K562 (cell line): ENCODE measurements at regions of chr20 and their contacts with region 1.

Region 1: DNA sequence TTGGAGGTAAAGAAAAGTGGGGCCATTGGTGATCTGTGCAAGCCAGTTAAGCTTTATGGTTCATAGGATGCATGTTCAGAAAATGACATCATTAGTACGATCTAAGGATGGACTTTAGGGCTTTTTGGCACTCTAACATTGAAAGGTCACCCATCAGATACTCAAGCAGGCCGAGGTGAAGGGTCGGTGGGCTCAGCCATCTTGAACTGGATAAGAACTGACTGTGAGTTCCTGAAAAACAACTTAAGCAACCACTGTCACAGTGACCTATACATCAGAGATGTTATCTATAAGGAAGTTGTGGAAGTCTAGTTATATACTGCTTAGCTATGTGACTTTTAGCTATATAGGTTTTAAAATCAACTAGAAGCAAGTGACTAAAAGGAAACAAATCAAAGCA is 13.0 kb upstream of the ITCH start:
- DNase-seq: no peak
- ATAC-seq: peak; percentile 58
- H3K4me3 ChIP-seq: no peak overlapping the region
- H3K27ac ChIP-seq: no peak overlapping the region
- H3K4me1 ChIP-seq: peaks cover 0 to 8% of the 10 kb centered on the region in 2 experiments; a peak in 3 of 5 replicates
- H3K27me3 ChIP-seq: no peaks in the 10 kb centered on the region
- CTCF ChIP-seq: no peak
- EP300 ChIP-seq: no peak
- POLR2A ChIP-seq: no peak
- RAD21 ChIP-seq: no peak

Region 2: DNA sequence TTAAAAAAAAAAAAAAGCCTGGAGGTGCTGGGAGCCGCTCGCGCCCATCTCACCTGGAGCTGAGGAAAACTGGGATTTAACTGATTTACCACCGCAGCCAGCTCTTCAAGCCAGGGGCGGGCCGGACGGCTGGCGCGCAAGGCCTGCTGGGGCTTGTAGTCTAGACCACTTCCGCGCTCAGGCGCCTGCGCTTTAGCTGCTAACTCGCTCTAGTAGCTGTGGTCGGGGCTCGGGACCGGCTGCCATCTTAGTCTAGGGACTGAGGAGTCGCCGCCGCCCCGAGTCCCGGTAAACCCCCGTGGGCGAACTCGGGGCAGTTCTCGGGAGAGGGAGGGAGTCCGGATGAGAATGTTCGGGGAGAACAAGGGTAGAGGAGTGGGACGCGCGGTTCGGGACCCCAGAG is 13.0 kb after region 1 on chr20 and contains the start of gene ITCH:
- CTCF ChIA-PET with region 1: no interaction called
- POLR2A ChIA-PET with region 1: interaction called, 12 read pairs
- in situ Hi-C with region 1: no loop called
- intact Hi-C with region 1: no loop called
- DNase-seq: peak; percentile 94 to 97 (median 94)
- ATAC-seq: peak; percentile 99
- H3K4me3 ChIP-seq: peak within 1 kb of the TSS; percentile 91
- H3K27ac ChIP-seq: peak within 1 kb of the TSS; percentile 86
- H3K4me1 ChIP-seq: peaks cover 18 to 23% of the 10 kb centered on the region in 2 experiments; a peak in 4 of 5 replicates
- H3K27me3 ChIP-seq: no peaks in the 10 kb centered on the region
- CTCF ChIP-seq: no peak
- EP300 ChIP-seq: no peak
- POLR2A ChIP-seq: peak; percentile 94
- RAD21 ChIP-seq: no peak
- polyA plus RNA-seq, gene ITCH: 7.5 to 13.1 TPM

Region 3: GRCh38 chr20:34458631-34459030 is 108.5 kb after region 1 on chr20:
- CTCF ChIA-PET with region 1: no interaction called
- POLR2A ChIA-PET with region 1: no interaction called
- in situ Hi-C with region 1: no loop called
- intact Hi-C with region 1: no loop called
- DNase-seq: no peak
- ATAC-seq: no peak
- H3K4me3 ChIP-seq: no peak overlapping the region
- H3K27ac ChIP-seq: peak overlapping the region; percentile 4; the same call in 1 of the 3 replicates
- H3K4me1 ChIP-seq: peaks cover 10 to 12% of the 10 kb centered on the region in 2 experiments; a peak in 4 of 5 replicates
- H3K27me3 ChIP-seq: no peaks in the 10 kb centered on the region
- CTCF ChIP-seq: no peak
- EP300 ChIP-seq: no peak
- POLR2A ChIP-seq: no peak
- RAD21 ChIP-seq: no peak